ENCODE measurements at regions of chr20 and their contacts with region 1.

Region 1: DNA sequence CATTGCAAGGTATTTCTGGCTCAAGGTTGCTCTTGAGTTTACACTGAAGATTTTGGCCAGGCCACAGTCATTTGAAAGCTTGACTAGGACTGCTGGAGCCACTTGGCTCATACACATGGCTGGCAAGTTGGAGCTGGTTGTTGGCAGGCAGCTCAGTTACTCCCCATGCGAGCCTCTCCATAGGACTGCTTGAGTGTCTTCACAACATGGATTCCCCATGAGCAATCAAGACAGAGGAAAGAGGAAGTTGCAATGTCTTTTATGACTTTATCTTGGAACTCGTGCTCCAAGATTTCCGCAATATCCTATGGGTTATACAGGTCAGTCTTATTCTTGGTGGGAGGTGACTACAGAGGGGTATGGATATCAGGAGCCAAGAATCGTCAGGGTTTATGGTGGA is 1.4 kb upstream of the MANBAL start:
- DNase-seq: no peak

Region 2: GRCh38 chr20:37327748-37328147 is 39.7 kb after region 1 on chr20:
- intact Hi-C with region 1: no loop called
- DNase-seq: no peak

Region 3: DNA sequence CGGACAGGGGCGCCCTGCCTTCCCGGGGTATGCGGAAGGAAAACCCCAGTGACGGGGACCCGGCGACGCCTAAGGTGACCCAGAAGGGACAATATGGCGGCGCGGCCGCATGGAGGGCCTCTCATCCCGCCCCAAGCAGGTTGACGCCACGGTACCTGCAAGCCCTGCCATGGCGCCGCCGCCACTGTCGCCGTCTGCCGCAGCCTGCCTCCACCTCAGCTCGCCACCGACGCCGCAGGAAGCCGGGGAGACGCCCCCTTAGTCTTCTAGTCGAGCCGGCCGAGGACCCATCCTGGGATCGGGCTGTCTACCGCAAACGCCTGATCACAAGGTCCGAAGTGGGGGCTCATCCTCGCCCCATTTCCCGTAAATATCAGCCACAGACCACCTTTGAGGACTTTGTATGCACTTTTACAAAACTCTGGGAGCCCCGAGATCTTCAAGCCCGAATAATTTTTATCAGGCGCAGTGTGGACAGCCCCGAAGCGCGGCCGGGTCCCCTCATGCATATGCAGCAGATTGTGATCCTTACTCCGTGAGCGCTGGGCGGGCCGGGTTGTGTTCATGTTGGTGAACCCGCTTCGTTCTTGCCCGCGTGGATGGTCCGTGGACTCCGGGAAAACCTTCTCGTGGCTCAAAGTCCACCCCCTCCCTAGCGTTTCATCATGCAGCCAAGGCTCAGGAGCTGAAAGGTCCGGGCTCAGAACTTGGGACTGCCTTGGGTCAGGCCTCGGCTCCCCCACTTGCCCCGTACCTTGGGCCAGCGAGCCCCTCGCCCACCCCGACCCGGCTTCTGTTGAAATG is 239.7 kb after region 1 on chr20 and contains the start of gene BLCAP:
- intact Hi-C with region 1: loop called (anchors 5 kb)
- DNase-seq: peak; percentile 94
- total RNA-seq, gene BLCAP: 89.3 TPM

Measured in cardiac septum (tissue), 1 donor.